ENCODE measurements at regions of chr11 and their contacts with region 1.

Region 1: GRCh38 chr11:122655527-122656072 is at the start of gene UBASH3B:
- DNase-seq: peak; percentile 34 to 79 (median 54)
- ATAC-seq: peak; percentile 67
- H3K4me3 ChIP-seq: peak within 1 kb of the TSS; percentile 89
- H3K4me3 Mint-ChIP-seq: peak within 1 kb of the TSS; percentile 100
- H3K27ac ChIP-seq: peak within 1 kb of the TSS; percentile 46 to 61
- H3K27ac Mint-ChIP-seq: peak within 1 kb of the TSS; percentile 91
- H3K4me1 ChIP-seq: peaks cover 48% of the 10 kb centered on the region
- H3K4me1 Mint-ChIP-seq: peaks cover 51% of the 10 kb centered on the region
- H3K27me3 ChIP-seq: no peaks in the 10 kb centered on the region
- H3K27me3 Mint-ChIP-seq: no peaks in the 10 kb centered on the region
- CTCF ChIP-seq: peak; percentile 15
- total RNA-seq, gene UBASH3B: 24.5 to 28.6 TPM

Region 2: DNA sequence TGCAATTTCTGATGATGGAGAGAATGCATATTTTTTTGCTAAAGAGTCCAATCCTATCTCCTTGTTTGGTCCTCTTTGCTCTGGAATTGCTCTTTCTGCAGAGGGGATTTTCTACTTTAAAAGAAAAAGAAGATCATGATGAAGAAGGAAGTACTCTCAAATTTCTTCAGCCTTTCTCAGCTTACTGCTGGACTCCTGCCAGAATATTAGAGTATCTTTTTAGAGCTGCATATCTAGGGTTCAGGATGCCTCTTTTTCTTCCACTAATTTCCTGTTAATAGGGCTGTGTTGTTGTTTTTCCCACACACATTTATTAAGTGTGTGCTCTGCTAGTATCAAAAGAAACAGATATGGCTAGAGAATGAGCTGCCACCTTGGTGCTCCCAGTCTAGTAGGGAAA is 18.1 kb after region 1 on chr11:
- CTCF ChIA-PET with region 1: interaction called, 8 read pairs
- POLR2A ChIA-PET with region 1: interaction called, 44 read pairs
- intact Hi-C with region 1: loop called (anchors 2 kb)
- DNase-seq: no peak
- ATAC-seq: no peak
- H3K4me3 ChIP-seq: no peak overlapping the region
- H3K4me3 Mint-ChIP-seq: no peak overlapping the region
- H3K27ac ChIP-seq: peak overlapping the region in 1 of 2 donors; percentile 9
- H3K27ac Mint-ChIP-seq: peak overlapping the region; percentile 85
- H3K4me1 ChIP-seq: peaks cover 98% of the 10 kb centered on the region
- H3K4me1 Mint-ChIP-seq: peaks cover 83% of the 10 kb centered on the region
- H3K27me3 ChIP-seq: no peaks in the 10 kb centered on the region
- H3K27me3 Mint-ChIP-seq: no peaks in the 10 kb centered on the region
- CTCF ChIP-seq: no peak

Region 3: DNA sequence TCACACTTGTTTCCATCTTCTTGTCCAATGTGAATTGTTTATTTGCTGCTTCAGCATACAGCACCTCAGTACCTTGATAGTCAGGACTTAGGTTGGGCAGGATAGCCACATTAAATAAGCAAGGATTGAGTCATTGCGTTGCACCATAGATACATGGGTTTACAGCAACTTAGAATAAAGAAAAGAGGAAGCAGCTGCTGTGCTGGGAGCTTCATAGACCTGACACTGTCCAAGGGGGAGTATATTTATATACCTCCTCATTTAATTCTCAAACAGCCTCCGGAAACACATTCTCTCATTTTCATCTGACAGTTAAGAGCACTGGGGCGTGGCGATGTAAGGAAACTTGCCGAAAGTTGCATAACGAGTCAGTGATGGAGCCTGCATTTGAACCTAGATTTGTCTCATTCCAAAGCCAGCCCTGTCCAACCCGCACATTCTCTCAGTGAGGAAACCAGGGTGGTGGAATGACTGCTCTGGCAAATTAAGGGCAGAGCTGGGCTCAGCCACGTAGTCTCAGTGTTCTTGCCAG is 42.1 kb after region 1 on chr11:
- CTCF ChIA-PET with region 1: interaction called, 12 read pairs
- POLR2A ChIA-PET with region 1: interaction called, 70 read pairs
- intact Hi-C with region 1: loop called (anchors 1 to 5 kb)
- DNase-seq: peak in 13 of 14 experiments; percentile 28 to 76 (median 47)
- ATAC-seq: peak; percentile 80
- H3K4me3 ChIP-seq: peak overlapping the region; percentile 8
- H3K4me3 Mint-ChIP-seq: peak overlapping the region; percentile 75
- H3K27ac ChIP-seq: peak overlapping the region; percentile 77 to 80
- H3K27ac Mint-ChIP-seq: peak overlapping the region; percentile 90
- H3K4me1 ChIP-seq: peaks cover 84% of the 10 kb centered on the region
- H3K4me1 Mint-ChIP-seq: peaks cover 91% of the 10 kb centered on the region
- H3K27me3 ChIP-seq: no peaks in the 10 kb centered on the region
- H3K27me3 Mint-ChIP-seq: no peaks in the 10 kb centered on the region
- CTCF ChIP-seq: no peak

Region 4: DNA sequence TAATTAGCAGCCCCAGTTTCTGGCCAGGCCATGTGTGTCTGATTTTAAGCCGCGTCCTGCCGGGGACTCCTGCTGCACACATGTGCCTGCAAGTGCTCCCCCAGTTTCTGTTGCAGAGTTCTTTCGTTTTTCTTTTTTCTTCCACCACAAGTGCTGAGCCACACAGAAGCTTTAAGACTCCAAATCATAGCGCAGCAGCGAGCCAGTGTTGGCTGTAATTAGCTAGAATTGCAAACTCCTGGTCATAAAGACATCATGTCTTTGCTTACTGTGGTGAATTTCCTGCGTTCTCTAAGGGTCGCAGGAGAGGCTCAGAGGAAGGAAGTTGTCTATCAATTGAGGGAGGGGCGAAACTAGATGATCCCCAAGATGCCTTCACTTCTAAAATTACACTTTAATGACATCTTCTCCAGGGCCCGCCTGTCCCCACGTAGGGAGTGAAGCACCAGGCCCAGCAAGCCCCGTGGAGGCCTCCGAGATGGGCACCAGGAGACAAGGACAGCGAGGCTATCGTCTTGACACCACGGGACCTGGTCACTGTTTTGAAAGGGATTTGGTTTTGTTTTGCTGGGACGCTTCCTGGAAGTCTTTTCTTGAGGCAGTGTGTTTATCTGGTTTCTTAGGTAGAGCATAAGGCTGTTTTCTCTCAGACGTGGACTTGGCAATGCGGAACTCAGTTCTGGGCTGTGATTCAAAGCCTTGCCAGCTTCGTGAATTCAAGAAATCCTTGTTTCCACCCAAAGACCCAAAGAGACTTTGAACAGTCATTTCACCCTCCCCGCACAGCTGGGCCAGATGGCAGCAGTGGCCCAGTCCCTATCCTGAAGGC is 71.7 kb after region 1 on chr11:
- CTCF ChIA-PET with region 1: interaction called, 11 read pairs
- POLR2A ChIA-PET with region 1: interaction called, 16 read pairs
- intact Hi-C with region 1: no loop called
- DNase-seq: peak in 10 of 14 experiments; percentile 11 to 64 (median 41)
- ATAC-seq: peak; percentile 74
- H3K4me3 ChIP-seq: peak overlapping the region; percentile 41
- H3K4me3 Mint-ChIP-seq: peak overlapping the region; percentile 80
- H3K27ac ChIP-seq: peak overlapping the region; percentile 58 to 91
- H3K27ac Mint-ChIP-seq: peak overlapping the region; percentile 95
- H3K4me1 ChIP-seq: peaks cover 74% of the 10 kb centered on the region
- H3K4me1 Mint-ChIP-seq: peaks cover 57% of the 10 kb centered on the region
- H3K27me3 ChIP-seq: no peaks in the 10 kb centered on the region
- H3K27me3 Mint-ChIP-seq: no peaks in the 10 kb centered on the region
- CTCF ChIP-seq: no peak

Region 5: DNA sequence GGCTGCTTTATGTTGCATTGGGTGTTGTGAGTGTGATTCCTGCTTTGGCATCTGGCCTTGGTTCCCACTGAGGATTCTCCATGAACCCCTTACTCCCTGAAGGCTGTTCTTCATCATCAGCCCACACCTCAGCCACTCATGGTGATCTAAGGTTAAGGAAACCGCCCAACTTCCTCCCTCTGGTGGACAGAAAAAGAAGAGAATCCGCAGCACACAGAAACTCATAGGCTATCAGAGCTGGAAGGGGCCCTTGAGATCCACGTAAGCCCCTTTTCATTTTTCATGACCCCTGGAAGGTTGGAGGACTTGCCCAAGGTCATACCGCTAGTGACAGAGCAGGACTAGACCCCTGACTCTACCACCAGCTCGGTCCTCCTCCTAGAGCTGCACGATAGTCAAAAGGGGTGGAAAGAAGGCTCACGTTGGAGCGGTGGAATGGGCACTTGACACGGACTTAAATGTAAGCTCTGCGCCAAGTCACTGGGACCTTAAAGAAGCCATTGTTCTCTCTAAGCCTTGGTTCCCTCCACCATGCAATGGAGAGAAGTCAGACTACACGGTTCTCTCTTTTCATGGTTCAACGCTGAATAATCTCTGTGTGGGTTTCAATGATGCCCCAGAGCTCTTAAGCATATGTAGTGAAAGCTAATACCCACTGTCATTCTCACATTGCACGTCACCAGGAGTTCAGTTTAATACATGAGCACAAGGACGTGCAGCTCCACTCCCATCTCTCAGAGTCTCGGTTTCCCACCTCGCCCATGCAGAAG is 99.1 kb after region 1 on chr11:
- CTCF ChIA-PET with region 1: interaction called, 28 read pairs
- POLR2A ChIA-PET with region 1: interaction called, 31 read pairs
- intact Hi-C with region 1: loop called (anchors 1 to 2 kb)
- DNase-seq: peak in 13 of 14 experiments; percentile 14 to 75 (median 27)
- ATAC-seq: peak; percentile 64
- H3K4me3 ChIP-seq: no peak overlapping the region
- H3K4me3 Mint-ChIP-seq: no peak overlapping the region
- H3K27ac ChIP-seq: no peak overlapping the region
- H3K27ac Mint-ChIP-seq: peak overlapping the region; percentile 5
- H3K4me1 ChIP-seq: peaks cover 39% of the 10 kb centered on the region
- H3K4me1 Mint-ChIP-seq: peaks cover 67% of the 10 kb centered on the region
- H3K27me3 ChIP-seq: no peaks in the 10 kb centered on the region
- H3K27me3 Mint-ChIP-seq: no peaks in the 10 kb centered on the region
- CTCF ChIP-seq: peak; percentile 69

Region 6: GRCh38 chr11:122874991-122875390 is 219.4 kb after region 1 on chr11:
- CTCF ChIA-PET with region 1: no interaction called
- POLR2A ChIA-PET with region 1: no interaction called
- intact Hi-C with region 1: no loop called
- DNase-seq: no peak
- ATAC-seq: no peak
- H3K4me3 ChIP-seq: no peak overlapping the region
- H3K4me3 Mint-ChIP-seq: no peak overlapping the region
- H3K27ac ChIP-seq: no peak overlapping the region
- H3K27ac Mint-ChIP-seq: no peak overlapping the region
- H3K4me1 ChIP-seq: no peaks in the 10 kb centered on the region
- H3K4me1 Mint-ChIP-seq: peaks cover 9% of the 10 kb centered on the region
- H3K27me3 ChIP-seq: no peaks in the 10 kb centered on the region
- H3K27me3 Mint-ChIP-seq: no peaks in the 10 kb centered on the region
- CTCF ChIP-seq: no peak